ENCODE measurements at regions of chr10 and their contacts with region 1.

Region 1: GRCh38 chr10:35563261-35563891 is 41.8 kb upstream of the GJD4 start:
- DNase-seq: peak; percentile 61 to 83
- ATAC-seq: peak; percentile 57 to 85; a peak in 4 of 6 replicates
- H3K4me3 ChIP-seq: no peak overlapping the region
- H3K27ac ChIP-seq: no peak overlapping the region
- H3K4me1 ChIP-seq: no peaks in the 10 kb centered on the region
- CTCF ChIP-seq: peak; percentile 96
- EP300 ChIP-seq: no peak
- POLR2A ChIP-seq: no peak
- RAD21 ChIP-seq: peak; percentile 72

Region 2: DNA sequence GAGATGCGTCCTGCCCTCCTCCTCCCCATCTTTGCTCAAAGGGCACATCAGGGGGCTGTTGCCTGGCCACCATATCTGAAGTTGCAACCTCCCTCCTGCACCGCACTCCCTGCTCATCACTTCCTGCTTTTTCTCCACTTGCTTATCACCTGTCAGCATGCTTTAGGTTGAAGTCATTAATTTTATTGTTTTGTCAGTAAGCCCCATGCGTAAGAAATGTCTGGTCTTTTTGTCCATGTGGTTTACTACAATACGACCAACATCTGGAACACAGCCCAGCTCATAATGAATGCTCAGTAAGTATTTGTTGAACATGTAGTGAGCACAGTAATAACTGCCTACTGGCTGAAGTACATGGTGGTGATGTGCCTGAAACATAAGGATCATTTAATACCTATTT is 29.8 kb before region 1 on chr10:
- CTCF ChIA-PET with region 1: interaction called, 11 read pairs
- POLR2A ChIA-PET with region 1: no interaction called
- DNase-seq: no peak
- ATAC-seq: no peak
- H3K4me3 ChIP-seq: no peak overlapping the region
- H3K27ac ChIP-seq: no peak overlapping the region
- H3K4me1 ChIP-seq: no peaks in the 10 kb centered on the region
- CTCF ChIP-seq: no peak
- EP300 ChIP-seq: no peak
- POLR2A ChIP-seq: no peak
- RAD21 ChIP-seq: no peak

Region 3: GRCh38 chr10:35546824-35547273 is 16.5 kb before region 1 on chr10:
- CTCF ChIA-PET with region 1: interaction called, 26 read pairs
- POLR2A ChIA-PET with region 1: no interaction called
- DNase-seq: peak; percentile 35 to 86
- ATAC-seq: peak; percentile 81 to 92
- H3K4me3 ChIP-seq: no peak overlapping the region
- H3K27ac ChIP-seq: peak overlapping the region; percentile 59 to 73
- H3K4me1 ChIP-seq: peaks cover 30% of the 10 kb centered on the region
- CTCF ChIP-seq: peak; percentile 32; the same call in 2 of the 3 replicates
- EP300 ChIP-seq: no peak
- POLR2A ChIP-seq: no peak
- RAD21 ChIP-seq: peak; percentile 28 to 29; a peak in 2 of 5 replicates

Region 4: DNA sequence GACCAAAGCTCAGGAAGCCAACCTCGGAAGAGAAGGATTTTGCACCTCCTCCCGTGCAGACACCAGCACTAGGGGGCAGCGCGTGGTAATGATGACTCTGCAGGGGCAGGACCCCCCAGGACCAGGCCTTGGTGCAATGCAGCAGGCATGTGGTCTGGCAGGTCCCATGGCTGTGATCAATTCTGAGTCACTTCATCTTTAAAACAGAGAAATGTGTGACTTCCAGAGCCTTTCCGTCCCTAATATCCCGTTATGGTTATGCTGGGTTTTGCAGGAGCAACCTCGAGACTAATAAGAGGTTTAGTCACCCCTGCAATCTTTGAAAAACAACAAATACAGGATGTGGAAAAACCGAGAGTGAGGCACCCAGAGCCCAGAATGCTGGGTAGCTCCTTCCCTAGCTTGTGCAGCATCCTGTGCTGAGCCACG is 11.6 kb after region 1 on chr10:
- CTCF ChIA-PET with region 1: interaction called, 19 read pairs
- POLR2A ChIA-PET with region 1: no interaction called
- DNase-seq: no peak
- ATAC-seq: peak in 1 of 2 experiments; percentile 43; a peak in 2 of 6 replicates
- H3K4me3 ChIP-seq: no peak overlapping the region
- H3K27ac ChIP-seq: no peak overlapping the region
- H3K4me1 ChIP-seq: no peaks in the 10 kb centered on the region
- CTCF ChIP-seq: no peak
- EP300 ChIP-seq: no peak
- POLR2A ChIP-seq: no peak
- RAD21 ChIP-seq: no peak

Region 5: DNA sequence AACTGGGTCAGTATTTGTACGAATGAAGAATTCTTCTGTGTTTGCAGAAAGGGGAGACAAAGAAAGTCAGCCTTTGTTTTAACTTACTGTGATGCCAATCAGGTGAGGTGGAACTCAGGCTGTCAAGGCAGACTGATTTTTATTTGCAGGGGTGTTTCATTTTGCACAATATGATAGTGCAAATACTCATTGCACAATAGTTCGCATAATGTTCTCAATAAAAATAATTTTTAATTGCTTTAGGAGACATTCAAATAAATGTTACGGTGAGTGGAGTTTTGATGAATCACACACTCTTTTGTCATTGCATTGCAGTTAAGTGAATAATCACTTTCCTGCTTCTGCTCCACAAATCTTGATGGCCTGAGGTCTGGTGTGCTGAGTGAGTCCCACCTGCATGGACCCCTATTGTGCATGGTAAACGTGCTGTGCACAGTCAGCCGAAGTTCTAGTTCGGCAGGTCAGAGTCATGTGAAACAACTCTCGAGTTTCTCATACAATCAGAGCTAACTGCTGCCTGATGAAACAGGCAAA is 220.0 kb after region 1 on chr10:
- CTCF ChIA-PET with region 1: no interaction called
- POLR2A ChIA-PET with region 1: no interaction called
- DNase-seq: peak; percentile 8 to 35
- ATAC-seq: peak; percentile 81 to 83
- H3K4me3 ChIP-seq: no peak overlapping the region
- H3K27ac ChIP-seq: peak overlapping the region; percentile 42 to 55; a peak in 5 of 6 replicates
- H3K4me1 ChIP-seq: peaks cover 11% of the 10 kb centered on the region; the same call in 2 of the 3 replicates
- CTCF ChIP-seq: no peak
- EP300 ChIP-seq: 0 out of 5 replicates have a peak, but pooled peaks of 1 of the 2 experiments have one; percentile 16
- POLR2A ChIP-seq: no peak
- RAD21 ChIP-seq: no peak

Measured in A549 (cell line).